PC-9 (cell line): ENCODE measurements at regions of chr10 and their contacts with region 1.

Region 1: GRCh38 chr10:132458593-132459300 is 61.7 kb downstream of the PWWP2B start:
- DNase-seq: peak in 1 of 2 experiments; percentile 48
- H3K4me3 ChIP-seq: no peak overlapping the region
- H3K27ac ChIP-seq: no peak overlapping the region
- H3K4me1 ChIP-seq: no peaks in the 10 kb centered on the region
- H3K27me3 ChIP-seq: no peaks in the 10 kb centered on the region
- CTCF ChIP-seq: peak; percentile 90

Region 2: DNA sequence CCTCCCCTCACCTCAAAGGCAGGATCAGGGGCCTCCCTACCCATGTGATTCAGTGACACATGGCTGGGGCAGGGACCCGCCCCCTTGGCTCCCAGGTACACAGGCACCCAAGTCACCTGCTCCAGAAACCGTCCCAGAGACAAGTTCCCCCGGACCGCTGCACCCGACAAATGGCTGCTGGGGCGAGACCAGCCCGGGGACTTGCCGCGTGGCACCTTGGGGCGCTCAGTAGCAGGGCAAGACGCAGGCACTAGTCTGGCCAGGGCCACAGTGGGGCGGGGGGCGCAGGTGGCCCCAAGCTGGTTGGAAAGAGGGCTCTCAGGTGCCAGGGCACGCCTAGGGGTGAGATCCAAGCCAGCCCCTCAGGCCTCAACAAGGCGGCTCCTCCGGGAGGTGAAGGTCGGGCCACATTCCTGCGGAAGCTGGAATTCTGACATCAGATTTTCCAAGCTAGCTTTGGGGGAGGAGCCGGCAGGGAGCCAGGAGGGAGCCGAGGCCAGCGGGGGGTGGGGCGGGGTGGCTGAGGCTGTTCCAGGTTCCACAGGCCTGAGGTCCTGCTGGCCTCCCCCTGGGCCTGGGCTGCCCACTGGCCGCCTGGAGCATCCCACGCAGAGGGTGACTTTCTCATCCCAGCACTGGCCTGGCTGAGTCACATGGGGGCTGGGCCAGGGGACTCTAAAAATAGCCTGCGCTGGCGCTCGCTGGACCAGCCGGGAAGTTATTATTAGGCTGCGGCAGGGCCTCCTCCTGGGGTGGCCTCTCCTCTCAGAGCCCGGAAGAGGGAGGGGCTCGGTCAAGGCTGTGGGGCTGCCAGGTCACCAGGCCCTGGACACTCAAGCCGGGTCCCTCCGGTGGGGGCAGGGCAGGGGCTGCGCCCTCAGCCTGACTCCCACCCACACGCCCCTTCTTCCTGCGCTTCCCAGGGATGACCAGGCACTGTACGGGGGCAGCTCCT is 58.3 kb after region 1 on chr10:
- CTCF ChIA-PET with region 1: interaction called, 3 read pairs
- POLR2A ChIA-PET with region 1: interaction called, 5 read pairs
- intact Hi-C with region 1: loop called (anchors 5 kb)
- DNase-seq: peak; percentile 79 to 86
- H3K4me3 ChIP-seq: peak overlapping the region; percentile 30; the same call in 1 of the 2 replicates
- H3K27ac ChIP-seq: peak overlapping the region; percentile 78
- H3K4me1 ChIP-seq: peaks cover 26% of the 10 kb centered on the region
- H3K27me3 ChIP-seq: no peaks in the 10 kb centered on the region
- CTCF ChIP-seq: no peak

Region 3: GRCh38 chr10:132536971-132537712 is 78.4 kb after region 1 on chr10:
- CTCF ChIA-PET with region 1: no interaction called
- POLR2A ChIA-PET with region 1: no interaction called
- intact Hi-C with region 1: loop called (anchors 1 kb)
- DNase-seq: peak; percentile 91 to 99
- H3K4me3 ChIP-seq: peak overlapping the region; percentile 72
- H3K27ac ChIP-seq: no peak overlapping the region
- H3K4me1 ChIP-seq: peaks cover 39% of the 10 kb centered on the region
- H3K27me3 ChIP-seq: no peaks in the 10 kb centered on the region
- CTCF ChIP-seq: no peak

Region 4: DNA sequence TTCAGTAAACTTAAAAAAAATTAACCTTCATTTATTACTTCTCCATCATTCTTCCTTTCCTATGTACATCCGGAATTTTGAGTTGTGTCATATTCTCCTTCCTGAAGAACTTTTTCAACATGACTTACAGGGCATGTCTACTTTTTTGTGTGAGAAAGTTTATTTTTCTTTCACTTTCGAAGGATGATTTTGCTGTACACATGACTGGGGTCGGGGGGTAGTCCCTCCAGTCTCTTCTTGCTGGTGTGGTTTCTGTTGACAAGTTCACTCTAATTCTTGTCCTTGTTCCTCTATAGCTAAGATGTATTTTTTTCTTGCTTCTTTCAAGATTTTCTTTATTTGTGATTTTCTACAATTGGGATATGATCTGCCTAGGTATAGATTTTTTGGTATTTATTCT is 134.6 kb after region 1 on chr10:
- CTCF ChIA-PET with region 1: no interaction called
- POLR2A ChIA-PET with region 1: no interaction called
- intact Hi-C with region 1: loop called (anchors 5 kb)
- DNase-seq: no peak
- H3K4me3 ChIP-seq: no peak overlapping the region
- H3K27ac ChIP-seq: no peak overlapping the region
- H3K4me1 ChIP-seq: peaks cover 26% of the 10 kb centered on the region
- H3K27me3 ChIP-seq: no peaks in the 10 kb centered on the region
- CTCF ChIP-seq: no peak